Esophagus muscularis mucosa (tissue), 4 donors: ENCODE measurements at regions of chr17 and their contacts with region 1.

Region 1: GRCh38 chr17:50200457-50201275 is 765 bp downstream of the COL1A1 start:
- DNase-seq: peak; percentile 97
- H3K4me3 ChIP-seq: peak overlapping the region; percentile 51 to 69 (median 58)
- H3K27ac ChIP-seq: peak overlapping the region; percentile 88 to 94 (median 92)
- H3K4me1 ChIP-seq: peaks cover 26 to 96% (median 71%) of the 10 kb centered on the region in 4 donors
- H3K27me3 ChIP-seq: peaks cover 0 to 15% (median 3%) of the 10 kb centered on the region in 4 donors
- CTCF ChIP-seq: peak; percentile 98 to 100 (median 100)
- EP300 ChIP-seq: no peak
- POLR2A ChIP-seq: no peak

Region 2: DNA sequence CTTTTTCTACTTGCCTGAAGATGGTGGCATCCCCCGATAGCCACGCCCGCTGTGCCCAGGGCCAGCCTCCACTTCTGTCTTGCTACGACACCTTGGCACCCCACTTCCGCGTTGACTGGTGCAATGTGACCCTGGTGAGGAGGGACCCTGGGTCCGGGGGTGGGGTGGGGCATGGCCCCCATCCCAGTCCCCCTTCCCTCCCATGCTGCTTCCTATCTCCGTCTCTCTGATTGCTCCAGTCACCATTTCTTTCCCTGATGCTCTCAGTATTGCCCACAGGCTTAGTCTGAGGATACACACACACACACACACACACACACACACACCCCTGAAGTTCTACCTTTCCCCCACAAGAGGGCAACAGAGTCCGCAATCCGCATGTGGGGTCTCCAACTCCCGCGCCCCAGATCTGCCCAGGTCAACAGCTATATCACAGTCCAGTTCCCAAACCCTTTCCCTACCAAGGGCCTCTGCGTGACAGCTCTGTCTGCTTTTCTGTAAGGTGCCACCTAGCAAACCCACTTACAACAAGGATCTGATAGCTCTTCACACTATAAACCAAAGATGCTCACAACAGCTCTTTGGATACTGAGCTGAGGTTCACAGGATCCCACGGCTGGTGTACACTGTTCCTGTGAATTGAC is 31.4 kb before region 1 on chr17:
- intact Hi-C with region 1: loop called (anchors 1 kb)
- DNase-seq: no peak
- H3K4me3 ChIP-seq: no peak overlapping the region
- H3K27ac ChIP-seq: peak overlapping the region in 3 of 4 donors; percentile 28 to 96 (median 43)
- H3K4me1 ChIP-seq: peaks cover 33 to 79% (median 75%) of the 10 kb centered on the region in 4 donors
- H3K27me3 ChIP-seq: no peaks in the 10 kb centered on the region
- CTCF ChIP-seq: peak; percentile 67 to 93 (median 75)
- EP300 ChIP-seq: no peak
- POLR2A ChIP-seq: no peak

Region 3: GRCh38 chr17:50272711-50273653 is 72.3 kb after region 1 on chr17:
- intact Hi-C with region 1: loop called (anchors 1 kb)
- DNase-seq: no peak
- H3K4me3 ChIP-seq: peak overlapping the region; percentile 62 to 78 (median 68)
- H3K27ac ChIP-seq: peak overlapping the region; percentile 74 to 86 (median 80)
- H3K4me1 ChIP-seq: peaks cover 18 to 54% (median 32%) of the 10 kb centered on the region in 4 donors
- H3K27me3 ChIP-seq: peaks cover 0 to 13% (median 0%) of the 10 kb centered on the region in 4 donors
- CTCF ChIP-seq: peak in 2 of 3 experiments; percentile 99 to 100
- EP300 ChIP-seq: no peak
- POLR2A ChIP-seq: no peak

Region 4: GRCh38 chr17:50297407-50297865 is 96.8 kb after region 1 on chr17:
- intact Hi-C with region 1: loop called (anchors 1 kb)
- DNase-seq: no peak
- H3K4me3 ChIP-seq: no peak overlapping the region
- H3K27ac ChIP-seq: no peak overlapping the region
- H3K4me1 ChIP-seq: peaks cover 0 to 4% (median 2%) of the 10 kb centered on the region in 4 donors
- H3K27me3 ChIP-seq: no peaks in the 10 kb centered on the region
- CTCF ChIP-seq: peak in 2 of 3 experiments; percentile 91 to 99
- EP300 ChIP-seq: no peak
- POLR2A ChIP-seq: no peak